Activated CD8-positive, alpha-beta T cell treated with anti-CD3 and anti-CD28 coated beads for 36 hours (primary cell): ENCODE measurements at regions of chr14 and their contacts with region 1.

Region 1: GRCh38 chr14:64636208-64636979 is 67.8 kb upstream of the PLEKHG3 start:
- DNase-seq: peak; percentile 80
- ATAC-seq: peak; percentile 97
- H3K4me3 Mint-ChIP-seq: no peak overlapping the region
- H3K27ac Mint-ChIP-seq: no peak overlapping the region
- H3K4me1 Mint-ChIP-seq: peaks cover 6% of the 10 kb centered on the region
- H3K27me3 Mint-ChIP-seq: peaks cover 2% of the 10 kb centered on the region
- CTCF ChIP-seq: peak; percentile 88

Region 2: GRCh38 chr14:64338616-64339316 is 297.6 kb before region 1 on chr14:
- CTCF ChIA-PET with region 1: interaction called, 48 read pairs
- POLR2A ChIA-PET with region 1: no interaction called
- intact Hi-C with region 1: loop called (anchors 5 kb)
- DNase-seq: peak; percentile 94
- ATAC-seq: peak; percentile 87
- H3K4me3 Mint-ChIP-seq: peak overlapping the region; percentile 96
- H3K27ac Mint-ChIP-seq: peak overlapping the region; percentile 96
- H3K4me1 Mint-ChIP-seq: peaks cover 19% of the 10 kb centered on the region
- H3K27me3 Mint-ChIP-seq: no peaks in the 10 kb centered on the region
- CTCF ChIP-seq: no peak

Region 3: GRCh38 chr14:64520701-64521100 is 115.7 kb before region 1 on chr14:
- CTCF ChIA-PET with region 1: interaction called, 11 read pairs
- POLR2A ChIA-PET with region 1: no interaction called
- intact Hi-C with region 1: no loop called
- DNase-seq: no peak
- ATAC-seq: no peak
- H3K4me3 Mint-ChIP-seq: no peak overlapping the region
- H3K27ac Mint-ChIP-seq: no peak overlapping the region
- H3K4me1 Mint-ChIP-seq: peaks cover 26% of the 10 kb centered on the region
- H3K27me3 Mint-ChIP-seq: no peaks in the 10 kb centered on the region
- CTCF ChIP-seq: no peak

Region 4: GRCh38 chr14:64612021-64612380 is 24.4 kb before region 1 on chr14:
- CTCF ChIA-PET with region 1: interaction called, 18 read pairs
- POLR2A ChIA-PET with region 1: no interaction called
- intact Hi-C with region 1: no loop called
- DNase-seq: no peak
- ATAC-seq: no peak
- H3K4me3 Mint-ChIP-seq: no peak overlapping the region
- H3K27ac Mint-ChIP-seq: no peak overlapping the region
- H3K4me1 Mint-ChIP-seq: peaks cover 5% of the 10 kb centered on the region
- H3K27me3 Mint-ChIP-seq: no peaks in the 10 kb centered on the region
- CTCF ChIP-seq: no peak

Region 5: DNA sequence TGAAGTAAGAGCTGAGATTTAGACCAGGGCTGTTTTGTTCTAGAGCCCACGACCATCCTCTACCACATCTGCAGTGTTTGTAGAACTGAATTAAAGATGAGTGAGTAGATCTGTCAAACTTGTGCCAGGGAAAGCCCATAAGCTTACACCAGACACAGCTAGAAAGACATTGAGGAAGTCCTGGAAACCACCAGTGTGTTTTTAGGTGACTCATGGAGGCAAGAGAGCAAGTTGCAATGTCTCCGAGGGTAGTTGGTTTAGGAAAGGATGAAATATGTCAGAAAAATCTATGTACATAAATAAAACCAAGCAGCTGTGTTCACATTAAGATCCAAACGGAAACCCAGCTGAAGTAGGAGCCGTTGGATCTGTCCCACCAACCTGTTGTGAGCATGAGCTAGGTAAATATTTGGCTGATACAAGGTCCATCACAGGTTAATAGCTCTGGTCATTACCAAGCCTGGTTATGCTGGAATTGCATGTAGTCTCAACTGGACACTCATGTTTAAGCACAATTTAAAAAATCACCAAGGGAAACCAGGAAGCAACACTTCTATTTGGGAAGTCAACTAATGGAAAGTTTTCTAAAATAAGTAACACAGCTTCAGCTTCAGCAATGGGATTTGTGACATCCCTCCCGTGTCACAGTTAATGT is 18.0 kb after region 1 on chr14:
- CTCF ChIA-PET with region 1: interaction called, 18 read pairs
- POLR2A ChIA-PET with region 1: no interaction called
- intact Hi-C with region 1: no loop called
- DNase-seq: peak; percentile 16
- ATAC-seq: peak; percentile 82
- H3K4me3 Mint-ChIP-seq: no peak overlapping the region
- H3K27ac Mint-ChIP-seq: peak overlapping the region; percentile 28
- H3K4me1 Mint-ChIP-seq: peaks cover 13% of the 10 kb centered on the region
- H3K27me3 Mint-ChIP-seq: peaks cover 1% of the 10 kb centered on the region
- CTCF ChIP-seq: no peak